ENCODE measurements at regions of chr7 and their contacts with region 1.

Region 1: DNA sequence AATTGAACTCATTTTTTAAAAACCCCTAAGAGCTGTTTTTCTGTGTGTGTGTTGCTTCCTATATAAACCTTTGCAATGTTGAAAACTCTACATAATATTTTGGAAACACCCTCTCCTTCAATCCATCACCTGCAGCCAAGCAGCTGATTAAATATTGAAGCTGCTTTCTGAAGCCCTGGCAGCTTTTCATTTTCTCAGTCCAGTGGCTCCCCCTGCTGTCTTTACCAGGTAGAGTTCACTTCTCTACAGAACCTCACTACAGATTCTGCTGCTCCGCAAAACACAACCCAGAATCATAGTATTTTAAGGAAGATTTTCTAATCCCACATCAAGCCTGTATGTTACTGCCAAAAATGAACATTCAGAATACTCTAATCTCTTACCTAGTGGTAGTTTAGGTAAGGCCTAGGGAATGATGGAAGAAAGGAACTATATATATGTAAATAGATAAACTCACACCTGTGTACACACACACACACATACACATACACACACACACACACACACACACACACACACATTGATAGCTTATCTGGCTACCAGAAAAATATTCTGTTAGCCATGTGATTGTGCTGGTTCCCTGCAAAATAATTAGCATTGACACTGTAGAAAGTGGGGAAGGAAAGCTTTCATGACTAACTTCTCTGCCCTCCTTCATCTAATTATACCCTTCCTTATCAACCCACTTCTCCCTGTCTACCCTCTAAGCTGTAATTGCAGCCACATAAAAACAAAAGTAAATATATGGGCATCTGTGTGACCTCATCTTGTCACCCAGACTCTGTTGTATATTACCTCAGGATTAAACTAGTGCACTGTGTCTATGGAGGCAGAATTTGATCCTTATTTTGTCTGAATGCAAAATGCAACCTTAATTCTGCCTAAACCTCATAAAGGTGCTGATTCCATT is 229.5 kb upstream of the FZD1 start:
- DNase-seq: peak in 3 of 5 donors; percentile 26 to 50 (median 47)
- ATAC-seq: peak; percentile 32 to 77 (median 62)
- H3K4me3 ChIP-seq: no peak overlapping the region
- H3K27ac ChIP-seq: no peak overlapping the region
- H3K4me1 ChIP-seq: peaks cover 0 to 6% (median 0%) of the 10 kb centered on the region in 12 donors
- H3K27me3 ChIP-seq: no peaks in the 10 kb centered on the region
- CTCF ChIP-seq: peak; percentile 45 to 77 (median 70)
- POLR2A ChIP-seq: no peak

Region 2: GRCh38 chr7:90552521-90552920 is 482.2 kb before region 1 on chr7:
- intact Hi-C with region 1: loop called in 8 of 10 experiments (anchors 1 to 5 kb)
- DNase-seq: no peak
- ATAC-seq: peak in 1 of 4 donors; percentile 57
- H3K4me3 ChIP-seq: no peak overlapping the region
- H3K27ac ChIP-seq: no peak overlapping the region
- H3K4me1 ChIP-seq: no peaks in the 10 kb centered on the region
- H3K27me3 ChIP-seq: no peaks in the 10 kb centered on the region
- CTCF ChIP-seq: peak in 11 of 12 donors; percentile 18 to 63 (median 49)
- POLR2A ChIP-seq: no peak

Region 3: DNA sequence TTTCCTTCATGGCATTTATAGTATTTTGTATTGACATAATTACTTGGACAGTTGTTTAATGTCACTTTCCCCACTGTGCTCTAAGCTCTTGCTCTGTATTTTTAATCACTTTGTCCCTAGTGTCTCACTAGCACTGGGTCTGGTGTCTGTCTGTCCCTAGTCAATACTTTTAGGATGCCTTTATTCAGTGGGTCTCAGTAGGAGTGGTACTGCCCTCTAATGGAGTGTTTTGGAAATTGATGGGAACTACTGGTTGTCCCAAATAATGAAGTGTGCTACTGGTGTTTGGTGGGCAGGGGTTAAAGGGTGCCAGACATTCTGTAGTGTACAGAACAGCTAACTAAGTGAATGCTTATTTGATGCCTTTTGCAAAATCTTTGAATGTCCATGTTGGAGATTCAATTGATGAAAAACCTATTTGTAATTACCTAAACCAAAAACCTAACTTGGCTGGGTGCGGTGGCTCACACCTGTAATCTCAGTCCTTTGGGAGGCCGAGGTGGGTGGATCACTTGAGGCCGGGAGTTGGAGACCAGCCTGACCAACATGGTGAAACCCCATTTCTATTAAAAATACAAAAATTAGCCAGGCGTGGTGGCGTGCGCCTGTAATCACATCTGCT is 405.3 kb before region 1 on chr7:
- intact Hi-C with region 1: loop called in 2 of 10 experiments (anchors 5 to 10 kb)
- DNase-seq: no peak
- ATAC-seq: peak; percentile 78 to 95 (median 85)
- H3K4me3 ChIP-seq: no peak overlapping the region
- H3K27ac ChIP-seq: no peak overlapping the region
- H3K4me1 ChIP-seq: peaks cover 0 to 24% (median 18%) of the 10 kb centered on the region in 12 donors
- H3K27me3 ChIP-seq: no peaks in the 10 kb centered on the region
- CTCF ChIP-seq: peak; percentile 54 to 74 (median 67)
- POLR2A ChIP-seq: no peak

Region 4: DNA sequence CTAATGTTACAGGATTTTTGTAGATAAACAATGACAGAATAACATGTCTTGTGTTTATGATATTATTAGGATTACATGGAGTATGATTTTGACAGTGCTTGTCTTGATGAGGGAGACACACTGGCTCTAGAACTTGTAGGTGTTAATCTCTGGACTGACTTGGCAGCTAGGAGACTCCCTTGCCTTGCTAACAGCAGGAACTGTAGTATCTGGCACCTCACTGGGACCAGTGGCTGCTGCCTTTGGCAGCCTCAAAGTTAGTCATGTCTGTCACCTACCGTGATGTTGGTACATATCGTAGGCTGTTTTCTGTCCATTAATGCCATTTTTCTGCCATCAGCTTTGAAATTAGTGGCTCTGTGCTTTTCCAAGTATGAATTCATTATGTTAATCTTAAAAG is 177.1 kb before region 1 on chr7:
- intact Hi-C with region 1: loop called in 4 of 10 experiments (anchors 5 to 10 kb)
- DNase-seq: peak in 2 of 5 donors; percentile 11 to 39
- ATAC-seq: peak in 3 of 4 donors; percentile 72 to 79 (median 78)
- H3K4me3 ChIP-seq: no peak overlapping the region
- H3K27ac ChIP-seq: no peak overlapping the region
- H3K4me1 ChIP-seq: peaks cover 0 to 2% (median 0%) of the 10 kb centered on the region in 12 donors
- H3K27me3 ChIP-seq: no peaks in the 10 kb centered on the region
- CTCF ChIP-seq: peak in 5 of 12 donors; percentile 9 to 33 (median 28)
- POLR2A ChIP-seq: no peak

Region 5: DNA sequence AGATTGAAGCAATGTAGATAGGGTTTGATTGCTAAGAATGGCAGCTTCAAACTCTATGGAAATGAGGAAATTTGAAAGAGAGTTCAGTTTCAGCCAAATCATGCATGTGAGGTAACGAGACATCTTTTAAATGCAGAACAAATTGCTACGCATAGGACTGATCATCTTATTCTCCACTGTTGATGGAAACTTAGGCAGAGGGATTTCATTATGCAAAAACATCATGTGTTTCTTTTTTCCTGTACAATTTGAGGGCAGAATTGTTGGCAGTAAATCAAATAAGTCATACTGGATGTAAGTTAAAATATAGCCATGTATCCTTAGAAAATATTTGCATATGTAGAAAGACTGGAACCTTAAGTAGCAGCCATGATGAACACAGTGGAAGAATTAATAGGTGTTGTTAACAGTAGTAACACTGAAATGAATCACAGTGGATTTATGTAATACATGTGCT is 111.1 kb before region 1 on chr7:
- intact Hi-C with region 1: no loop called
- DNase-seq: no peak
- ATAC-seq: no peak
- H3K4me3 ChIP-seq: no peak overlapping the region
- H3K27ac ChIP-seq: no peak overlapping the region
- H3K4me1 ChIP-seq: no peaks in the 10 kb centered on the region
- H3K27me3 ChIP-seq: no peaks in the 10 kb centered on the region
- CTCF ChIP-seq: no peak
- POLR2A ChIP-seq: no peak